Activated CD4-positive, alpha-beta T cell treated with anti-CD3 and anti-CD28 coated beads for 36 hours (primary cell): ENCODE measurements at regions of chr9 and their contacts with region 1.

Region 1: GRCh38 chr9:84154320-84154719 is 173.7 kb downstream of the RMI1 start:
- DNase-seq: no peak
- ATAC-seq: no peak
- H3K4me3 Mint-ChIP-seq: no peak overlapping the region
- H3K27ac Mint-ChIP-seq: no peak overlapping the region
- H3K4me1 Mint-ChIP-seq: no peaks in the 10 kb centered on the region
- H3K27me3 Mint-ChIP-seq: peaks cover 6% of the 10 kb centered on the region

Region 2: GRCh38 chr9:84136092-84136868 is 18.0 kb before region 1 on chr9:
- CTCF ChIA-PET with region 1: interaction called, 3 read pairs
- POLR2A ChIA-PET with region 1: no interaction called
- intact Hi-C with region 1: loop called in 1 of 2 experiments (anchors 2 kb)
- DNase-seq: no peak
- ATAC-seq: no peak
- H3K4me3 Mint-ChIP-seq: no peak overlapping the region
- H3K27ac Mint-ChIP-seq: no peak overlapping the region
- H3K4me1 Mint-ChIP-seq: peaks cover 9% of the 10 kb centered on the region
- H3K27me3 Mint-ChIP-seq: peaks cover 25% of the 10 kb centered on the region

Region 3: DNA sequence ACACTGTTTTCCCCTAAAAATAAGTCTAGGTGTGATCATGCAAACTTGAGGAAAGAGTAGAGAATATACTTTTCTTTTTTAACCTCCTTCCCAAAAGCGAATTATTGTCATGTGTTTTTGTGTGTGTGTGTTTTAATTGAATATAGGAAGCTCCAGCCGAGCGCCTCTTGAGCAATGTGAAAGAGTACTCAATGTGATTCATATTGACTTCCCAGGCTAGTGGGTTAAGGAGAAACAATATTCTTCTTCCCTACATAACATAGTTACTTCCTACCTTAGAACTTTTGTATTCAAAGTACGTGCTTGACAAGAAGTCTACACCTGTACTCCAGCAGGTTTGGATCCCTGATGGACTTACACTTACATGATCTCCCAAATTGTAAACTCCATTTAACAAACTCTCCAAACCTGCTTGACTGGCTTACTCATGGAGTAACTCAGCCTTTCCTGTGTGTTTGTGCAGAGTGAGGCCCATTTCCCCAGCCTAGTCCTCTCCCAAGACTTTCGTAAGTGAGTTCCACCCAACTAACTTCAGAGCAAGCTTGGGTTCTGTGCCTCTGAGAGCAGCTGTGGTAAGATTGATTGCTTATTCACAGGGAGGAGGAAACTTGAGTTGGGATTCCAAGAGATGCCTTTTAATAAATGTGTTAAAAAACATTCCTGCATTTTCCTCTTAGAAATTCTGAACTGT is 176.9 kb after region 1 on chr9:
- CTCF ChIA-PET with region 1: no interaction called
- POLR2A ChIA-PET with region 1: no interaction called
- intact Hi-C with region 1: no loop called
- DNase-seq: no peak
- ATAC-seq: no peak
- H3K4me3 Mint-ChIP-seq: no peak overlapping the region
- H3K27ac Mint-ChIP-seq: no peak overlapping the region
- H3K4me1 Mint-ChIP-seq: no peaks in the 10 kb centered on the region
- H3K27me3 Mint-ChIP-seq: peaks cover 7% of the 10 kb centered on the region

Region 4: GRCh38 chr9:84538879-84539278 is 384.6 kb after region 1 on chr9:
- CTCF ChIA-PET with region 1: no interaction called
- POLR2A ChIA-PET with region 1: no interaction called
- intact Hi-C with region 1: no loop called
- DNase-seq: no peak
- ATAC-seq: no peak
- H3K4me3 Mint-ChIP-seq: no peak overlapping the region
- H3K27ac Mint-ChIP-seq: no peak overlapping the region
- H3K4me1 Mint-ChIP-seq: no peaks in the 10 kb centered on the region
- H3K27me3 Mint-ChIP-seq: no peaks in the 10 kb centered on the region